Calu3 (cell line): ENCODE measurements at regions of chr1 and their contacts with region 1.

Region 1: DNA sequence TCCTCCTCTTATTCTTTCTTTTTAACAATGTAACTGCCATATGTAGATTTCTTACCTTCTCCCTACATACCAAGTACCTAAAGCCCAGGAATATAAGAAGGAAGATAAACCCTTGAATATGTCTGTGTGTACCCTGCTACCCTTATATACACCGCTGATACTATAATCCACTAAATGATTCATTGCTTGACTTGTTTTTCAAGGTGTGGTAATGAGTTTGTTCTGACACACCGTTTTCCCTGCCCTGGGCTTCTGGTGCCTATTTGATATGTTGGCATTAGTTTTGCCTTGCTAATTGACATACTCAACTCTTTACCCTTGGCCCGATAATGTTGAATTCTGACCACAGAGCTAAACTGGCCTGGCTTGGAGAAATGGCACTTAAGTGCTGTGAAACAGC is 64.3 kb downstream of the IL23R start:
- DNase-seq: no peak
- H3K4me3 Mint-ChIP-seq: no peak overlapping the region
- H3K27ac Mint-ChIP-seq: no peak overlapping the region
- H3K4me1 Mint-ChIP-seq: peaks cover 8% of the 10 kb centered on the region
- H3K27me3 Mint-ChIP-seq: peaks cover 19% of the 10 kb centered on the region
- CTCF ChIP-seq: no peak

Region 2: GRCh38 chr1:67194209-67194863 is 36.2 kb before region 1 on chr1:
- CTCF ChIA-PET with region 1: no interaction called
- intact Hi-C with region 1: no loop called
- DNase-seq: no peak
- H3K4me3 Mint-ChIP-seq: no peak overlapping the region
- H3K27ac Mint-ChIP-seq: no peak overlapping the region
- H3K4me1 Mint-ChIP-seq: no peaks in the 10 kb centered on the region
- H3K27me3 Mint-ChIP-seq: peaks cover 20% of the 10 kb centered on the region
- CTCF ChIP-seq: no peak

Region 3: DNA sequence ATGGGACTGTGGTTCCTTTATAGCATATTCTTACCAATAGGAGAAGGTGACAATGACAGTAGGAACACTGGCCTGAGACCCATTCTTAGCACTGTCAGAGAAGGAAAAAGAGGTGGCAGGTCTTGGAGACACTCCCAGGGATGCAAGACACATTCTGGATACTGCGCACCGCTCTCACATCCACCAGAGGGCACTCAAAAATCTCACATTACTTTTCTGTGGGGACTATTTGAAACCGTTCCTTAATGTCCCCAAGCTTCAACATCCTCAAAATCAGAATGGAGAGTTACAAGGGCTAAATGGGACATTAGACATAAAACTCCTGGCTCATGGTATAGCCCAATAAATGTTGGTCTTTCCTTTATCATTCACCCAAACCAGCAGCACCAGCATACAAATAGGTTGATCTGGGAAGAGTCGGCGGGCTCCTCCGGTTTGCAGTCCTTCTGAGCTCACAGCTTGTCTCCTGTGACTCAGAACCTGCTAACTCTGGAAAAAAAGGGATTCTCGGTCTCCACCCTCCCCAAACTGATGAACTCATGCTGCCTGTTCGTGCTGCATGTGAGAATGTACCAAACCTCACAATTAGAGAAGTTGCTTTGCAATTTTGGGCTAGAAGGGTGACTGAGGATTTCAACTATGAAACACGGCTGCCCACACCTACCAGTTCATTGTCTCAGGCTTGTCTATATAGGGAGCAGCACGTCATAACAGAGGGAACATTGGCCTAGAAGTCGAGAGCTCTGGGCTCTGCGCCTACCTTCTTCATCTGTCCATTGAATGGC is 117.3 kb after region 1 on chr1:
- CTCF ChIA-PET with region 1: interaction called, 4 read pairs
- intact Hi-C with region 1: loop called (anchors 10 kb)
- DNase-seq: peak; percentile 19
- H3K4me3 Mint-ChIP-seq: no peak overlapping the region
- H3K27ac Mint-ChIP-seq: no peak overlapping the region
- H3K4me1 Mint-ChIP-seq: no peaks in the 10 kb centered on the region
- H3K27me3 Mint-ChIP-seq: no peaks in the 10 kb centered on the region
- CTCF ChIP-seq: peak; percentile 41